Activated naive CD4-positive, alpha-beta T cell treated with anti-CD3 and anti-CD28 coated beads for 36 hours (primary cell): ENCODE measurements at regions of chr11 and their contacts with region 1.

Region 1: DNA sequence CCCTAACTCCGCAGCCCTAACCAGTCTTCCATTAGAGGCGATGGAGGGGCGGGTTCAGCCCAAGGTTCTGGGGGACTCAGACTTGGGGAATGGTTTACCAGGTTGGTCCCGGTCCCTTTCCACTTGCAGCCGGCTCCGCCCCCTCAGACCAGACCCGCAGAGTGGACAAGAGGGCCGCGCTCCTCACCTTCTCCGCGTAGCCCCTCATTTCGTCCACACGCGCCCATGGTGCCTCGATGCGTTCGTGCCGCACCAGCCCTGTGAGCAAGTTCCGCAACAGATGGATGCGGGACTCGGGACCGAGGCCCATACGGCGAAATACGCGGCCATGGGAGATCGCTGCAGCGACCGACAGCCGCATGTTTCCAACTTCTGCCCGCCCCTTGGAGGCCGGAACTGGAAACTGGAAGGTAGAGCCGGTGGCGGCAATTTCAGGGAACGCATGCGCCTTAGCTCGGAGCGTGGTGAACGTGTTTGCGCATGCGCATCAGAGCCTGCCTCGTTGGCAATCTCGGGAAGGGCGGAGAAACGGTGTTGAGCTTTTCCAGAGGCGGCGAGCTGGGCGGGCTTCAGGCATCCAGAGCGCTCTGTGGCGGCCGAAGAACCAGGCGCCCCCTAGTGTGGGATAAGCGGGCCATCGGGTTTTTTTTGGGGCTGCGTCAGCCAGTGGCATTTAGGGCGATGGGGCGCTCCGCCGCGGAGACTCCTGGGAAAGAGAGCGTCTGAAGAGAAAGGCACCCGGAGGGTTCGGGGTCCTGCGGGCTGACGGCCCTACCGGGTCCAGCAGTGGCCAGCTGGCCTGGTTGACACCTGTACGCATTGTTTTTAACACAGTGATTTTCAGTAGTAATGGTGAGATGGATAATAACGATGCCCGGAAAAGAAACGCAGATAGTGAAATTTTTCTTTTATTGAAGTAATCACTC is at the start of gene MRPL17:
- DNase-seq: peak; percentile 100
- H3K4me3 Mint-ChIP-seq: peak within 1 kb of the TSS; percentile 97
- H3K27ac Mint-ChIP-seq: peak within 1 kb of the TSS; percentile 98
- H3K4me1 Mint-ChIP-seq: peaks cover 35% of the 10 kb centered on the region
- H3K27me3 Mint-ChIP-seq: no peaks in the 10 kb centered on the region
- total RNA-seq, gene MRPL17: 99.7 to 102 TPM

Region 2: GRCh38 chr11:6473481-6474422 is 209.4 kb before region 1 on chr11 and contains the start of gene TRIM3:
- CTCF ChIA-PET with region 1: no interaction called
- intact Hi-C with region 1: loop called (anchors 2 kb)
- DNase-seq: peak; percentile 62
- H3K4me3 Mint-ChIP-seq: peak within 1 kb of the TSS; percentile 80
- H3K27ac Mint-ChIP-seq: no peak within 1 kb of the TSS
- H3K4me1 Mint-ChIP-seq: peaks cover 19% of the 10 kb centered on the region
- H3K27me3 Mint-ChIP-seq: no peaks in the 10 kb centered on the region
- total RNA-seq, gene TRIM3: 7.7 to 9.4 TPM

Region 3: DNA sequence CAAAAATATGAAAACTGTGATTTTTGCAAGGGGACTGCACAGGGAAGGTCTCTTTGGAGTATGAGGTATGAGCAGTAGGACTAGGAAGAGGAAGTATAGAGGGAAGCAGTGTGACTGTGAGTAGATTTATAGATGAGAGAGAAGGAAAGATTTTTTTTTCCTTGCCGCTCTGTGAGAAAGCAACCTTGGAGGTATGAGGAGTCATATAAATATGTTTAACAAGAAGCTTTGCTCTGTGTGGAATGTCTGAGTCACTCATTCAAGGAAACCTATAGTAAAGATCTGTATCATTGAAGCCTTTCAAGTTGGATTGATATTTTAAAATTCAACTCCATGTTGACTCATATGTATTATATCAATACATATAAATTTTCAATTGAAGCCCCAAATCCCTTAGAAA is 159.9 kb before region 1 on chr11:
- CTCF ChIA-PET with region 1: interaction called, 5 read pairs
- intact Hi-C with region 1: loop called (anchors 1 kb)
- DNase-seq: no peak
- H3K4me3 Mint-ChIP-seq: no peak overlapping the region
- H3K27ac Mint-ChIP-seq: peak overlapping the region; percentile 48
- H3K4me1 Mint-ChIP-seq: peaks cover 46% of the 10 kb centered on the region
- H3K27me3 Mint-ChIP-seq: no peaks in the 10 kb centered on the region

Region 4: GRCh38 chr11:6612213-6613041 is 70.8 kb before region 1 on chr11 and contains the start of gene TAF10:
- CTCF ChIA-PET with region 1: interaction called, 21 read pairs
- intact Hi-C with region 1: loop called (anchors 1 kb)
- DNase-seq: peak; percentile 97
- H3K4me3 Mint-ChIP-seq: peak within 1 kb of the TSS; percentile 87
- H3K27ac Mint-ChIP-seq: peak within 1 kb of the TSS; percentile 90
- H3K4me1 Mint-ChIP-seq: peaks cover 39% of the 10 kb centered on the region
- H3K27me3 Mint-ChIP-seq: no peaks in the 10 kb centered on the region
- total RNA-seq, gene TAF10: 151 to 156 TPM

Region 5: DNA sequence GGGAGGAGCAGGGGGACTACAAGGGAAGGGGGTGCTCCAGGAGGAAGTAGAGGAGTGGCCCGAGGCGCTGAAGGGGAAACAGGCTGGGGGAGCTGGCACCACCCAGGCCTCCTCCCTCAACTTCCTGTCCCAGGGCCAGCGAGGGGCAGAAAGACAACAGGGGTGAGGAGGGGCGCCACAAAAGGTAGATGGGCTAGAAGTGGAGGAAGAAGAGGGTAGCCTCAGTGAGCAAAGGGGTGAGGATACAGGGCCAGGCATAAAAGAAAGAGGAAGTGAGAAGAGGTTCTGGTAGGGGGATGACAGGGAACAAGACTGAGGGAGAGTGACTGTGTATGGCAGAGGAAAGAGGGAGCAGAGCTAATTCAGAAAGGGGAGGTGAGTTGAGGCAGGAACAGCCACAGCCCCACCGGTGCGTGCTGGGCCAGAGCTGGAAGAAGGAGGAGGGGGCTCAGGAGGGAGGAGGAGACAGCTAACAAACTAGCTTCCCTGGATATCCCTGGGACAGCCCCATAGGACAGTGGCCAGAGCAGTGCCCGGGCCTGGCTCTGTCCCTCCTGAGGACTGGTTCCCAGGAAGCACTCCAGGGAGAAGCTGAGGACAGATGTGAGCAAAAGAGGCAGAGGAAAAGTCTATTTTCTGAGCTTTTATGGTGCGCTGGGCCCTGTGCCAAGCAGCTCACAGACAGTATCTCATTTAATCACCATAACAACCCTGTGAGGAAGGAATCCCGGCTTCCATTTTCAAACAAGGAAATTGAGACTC is 36.1 kb before region 1 on chr11:
- CTCF ChIA-PET with region 1: interaction called, 5 read pairs
- intact Hi-C with region 1: loop called (anchors 1 kb)
- DNase-seq: peak; percentile 52
- H3K4me3 Mint-ChIP-seq: no peak overlapping the region
- H3K27ac Mint-ChIP-seq: no peak overlapping the region
- H3K4me1 Mint-ChIP-seq: no peaks in the 10 kb centered on the region
- H3K27me3 Mint-ChIP-seq: no peaks in the 10 kb centered on the region

Region 6: GRCh38 chr11:6693342-6694228 is 10.4 kb after region 1 on chr11:
- CTCF ChIA-PET with region 1: interaction called, 14 read pairs
- intact Hi-C with region 1: loop called (anchors 1 kb)
- DNase-seq: peak; percentile 84
- H3K4me3 Mint-ChIP-seq: no peak overlapping the region
- H3K27ac Mint-ChIP-seq: peak overlapping the region; percentile 37
- H3K4me1 Mint-ChIP-seq: peaks cover 38% of the 10 kb centered on the region
- H3K27me3 Mint-ChIP-seq: no peaks in the 10 kb centered on the region

Region 7: GRCh38 chr11:7115780-7116179 is 432.6 kb after region 1 on chr11:
- CTCF ChIA-PET with region 1: no interaction called
- intact Hi-C with region 1: no loop called
- DNase-seq: no peak
- H3K4me3 Mint-ChIP-seq: no peak overlapping the region
- H3K27ac Mint-ChIP-seq: no peak overlapping the region
- H3K4me1 Mint-ChIP-seq: no peaks in the 10 kb centered on the region
- H3K27me3 Mint-ChIP-seq: peaks cover 9% of the 10 kb centered on the region